ENCODE measurements at regions of chr6 and their contacts with region 1.

Region 1: GRCh38 chr6:83057705-83058321 is 7.8 kb downstream of the UBE3D start:
- DNase-seq: peak in 1 of 2 experiments; percentile 51
- H3K4me3 ChIP-seq: no peak overlapping the region
- H3K27ac ChIP-seq: no peak overlapping the region
- H3K4me1 ChIP-seq: no peaks in the 10 kb centered on the region
- H3K27me3 ChIP-seq: no peaks in the 10 kb centered on the region
- CTCF ChIP-seq: peak; percentile 63 to 83 (median 70)
- EP300 ChIP-seq: no peak
- POLR2A ChIP-seq: no peak
- RAD21 ChIP-seq: peak; percentile 80 to 86

Region 2: GRCh38 chr6:82247634-82248232 is 810.1 kb before region 1 on chr6 and contains the start of gene IBTK:
- CTCF ChIA-PET with region 1: interaction called, 12 read pairs
- POLR2A ChIA-PET with region 1: interaction called, 5 read pairs
- DNase-seq: peak; percentile 84 to 98
- H3K4me3 ChIP-seq: peak within 1 kb of the TSS; percentile 84 to 95 (median 89)
- H3K27ac ChIP-seq: peak within 1 kb of the TSS; percentile 76; the same call in 1 of the 2 replicates
- H3K4me1 ChIP-seq: peaks cover 0 to 5% (median 4%) of the 10 kb centered on the region in 4 experiments; a peak in 3 of 7 replicates
- H3K27me3 ChIP-seq: no peaks in the 10 kb centered on the region
- CTCF ChIP-seq: no peak
- EP300 ChIP-seq: no peak
- POLR2A ChIP-seq: peak in 1 of 2 experiments; percentile 77; a peak in 2 of 3 replicates
- RAD21 ChIP-seq: no peak
- total RNA-seq, gene IBTK: 23.1 and 24.2 TPM in 2 replicates